K562 (cell line): ENCODE measurements at regions of chr17 and their contacts with region 1.

Region 1: GRCh38 chr17:35578197-35578928 is at the start of gene PEX12:
- DNase-seq: peak; percentile 78 to 97 (median 83)
- ATAC-seq: peak; percentile 90
- H3K4me3 ChIP-seq: peak within 1 kb of the TSS; percentile 77
- H3K27ac ChIP-seq: peak within 1 kb of the TSS; percentile 95
- H3K4me1 ChIP-seq: peaks cover 3 to 22% of the 10 kb centered on the region in 2 experiments; a peak in 3 of 5 replicates
- H3K27me3 ChIP-seq: no peaks in the 10 kb centered on the region
- CTCF ChIP-seq: peak in 2 of 3 experiments; percentile 8 to 17; a peak in 1 of 6 replicates
- EP300 ChIP-seq: no peak; the same call in 1 of the 2 replicates
- POLR2A ChIP-seq: peak; percentile 96
- RAD21 ChIP-seq: no peak
- polyA plus RNA-seq, gene PEX12: 4.0 to 6.7 TPM

Region 2: DNA sequence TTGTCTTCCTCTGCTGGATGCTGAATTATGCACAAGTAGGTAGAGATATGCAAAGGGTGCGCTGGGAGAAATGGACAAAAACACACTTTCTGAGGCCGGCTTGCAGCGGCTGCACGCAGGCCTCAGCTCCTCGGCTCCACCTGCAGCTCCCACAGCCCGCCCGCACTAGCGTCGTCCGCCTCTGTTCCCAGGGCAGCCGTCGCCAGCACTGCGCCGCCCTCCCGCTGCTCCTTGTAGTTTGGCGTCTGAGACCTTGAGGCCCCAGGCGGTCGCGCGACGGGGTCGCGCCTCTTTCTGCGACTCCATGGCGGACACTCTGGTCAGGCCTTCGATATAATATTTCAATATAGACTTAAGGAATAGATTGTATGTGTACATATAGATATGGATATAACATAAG is 170.8 kb before region 1 on chr17:
- CTCF ChIA-PET with region 1: no interaction called
- POLR2A ChIA-PET with region 1: no interaction called
- in situ Hi-C with region 1: no loop called
- intact Hi-C with region 1: no loop called
- DNase-seq: no peak
- ATAC-seq: no peak
- H3K4me3 ChIP-seq: no peak overlapping the region
- H3K27ac ChIP-seq: no peak overlapping the region
- H3K4me1 ChIP-seq: peaks cover 0 to 3% of the 10 kb centered on the region in 2 experiments; a peak in 1 of 5 replicates
- H3K27me3 ChIP-seq: peaks cover 0 to 4% of the 10 kb centered on the region in 2 experiments; a peak in 2 of 5 replicates
- CTCF ChIP-seq: no peak
- EP300 ChIP-seq: no peak
- POLR2A ChIP-seq: no peak
- RAD21 ChIP-seq: no peak

Region 3: DNA sequence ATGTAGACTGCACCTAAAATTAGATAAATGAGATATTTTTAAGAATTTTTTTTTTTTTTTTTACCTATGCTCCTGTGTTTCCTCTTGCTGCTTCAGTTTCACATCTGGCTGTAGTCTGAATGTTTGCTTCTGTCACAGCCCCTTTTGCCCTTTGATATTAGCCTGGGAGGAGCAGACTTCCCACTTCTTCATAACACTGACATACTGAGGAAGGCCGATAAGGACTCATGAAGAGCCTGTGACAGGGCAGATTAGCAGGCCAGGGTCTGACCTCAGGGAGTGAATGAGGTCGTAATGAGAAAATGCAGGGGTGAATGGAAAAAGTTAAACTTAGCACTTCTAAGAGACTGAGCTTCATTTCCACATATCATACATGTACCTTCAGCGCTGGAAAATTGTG is 17.7 kb before region 1 on chr17 and contains the start of gene SLFN14:
- CTCF ChIA-PET with region 1: no interaction called
- POLR2A ChIA-PET with region 1: interaction called, 122 read pairs
- in situ Hi-C with region 1: no loop called
- intact Hi-C with region 1: no loop called
- DNase-seq: peak; percentile 88 to 98 (median 92)
- ATAC-seq: peak; percentile 84
- H3K4me3 ChIP-seq: peak within 1 kb of the TSS; percentile 15; the same call in 1 of the 2 replicates
- H3K27ac ChIP-seq: peak within 1 kb of the TSS; percentile 68
- H3K4me1 ChIP-seq: peaks cover 11 to 45% of the 10 kb centered on the region in 2 experiments
- H3K27me3 ChIP-seq: no peaks in the 10 kb centered on the region
- CTCF ChIP-seq: no peak
- EP300 ChIP-seq: peak; percentile 99
- POLR2A ChIP-seq: peak; percentile 67
- RAD21 ChIP-seq: no peak
- polyA plus RNA-seq, gene SLFN14: 1.6 to 3.1 TPM

Region 4: GRCh38 chr17:35596530-35597233 is 18.3 kb after region 1 on chr17:
- CTCF ChIA-PET with region 1: no interaction called
- POLR2A ChIA-PET with region 1: interaction called, 132 read pairs
- in situ Hi-C with region 1: no loop called
- intact Hi-C with region 1: no loop called
- DNase-seq: no peak
- ATAC-seq: peak; percentile 42; the same call in 2 of the 3 replicates
- H3K4me3 ChIP-seq: no peak overlapping the region
- H3K27ac ChIP-seq: no peak overlapping the region
- H3K4me1 ChIP-seq: peaks cover 0 to 7% of the 10 kb centered on the region in 2 experiments; a peak in 1 of 5 replicates
- H3K27me3 ChIP-seq: no peaks in the 10 kb centered on the region
- CTCF ChIP-seq: no peak
- EP300 ChIP-seq: no peak
- POLR2A ChIP-seq: 0 out of 2 replicates have a peak, but pooled peaks have one; percentile 8
- RAD21 ChIP-seq: no peak